Panc1 (cell line): ENCODE measurements at regions of chr1 and their contacts with region 1.

Region 1: GRCh38 chr1:9326596-9326995 is 33.9 kb downstream of the SPSB1 start:
- DNase-seq: no peak
- ATAC-seq: no peak
- H3K4me3 ChIP-seq: no peak overlapping the region
- H3K27ac ChIP-seq: peak overlapping the region; percentile 61; the same call in 1 of the 2 replicates
- H3K4me1 ChIP-seq: peaks cover 77% of the 10 kb centered on the region
- H3K27me3 ChIP-seq: no peaks in the 10 kb centered on the region
- CTCF ChIP-seq: no peak

Region 2: GRCh38 chr1:9302745-9303524 is 23.7 kb before region 1 on chr1:
- CTCF ChIA-PET with region 1: no interaction called
- POLR2A ChIA-PET with region 1: no interaction called
- in situ Hi-C with region 1: no loop called
- intact Hi-C with region 1: no loop called
- DNase-seq: no peak
- ATAC-seq: peak; percentile 86
- H3K4me3 ChIP-seq: peak overlapping the region in 1 of 2 experiments; percentile 9; a peak in 1 of 4 replicates
- H3K27ac ChIP-seq: peak overlapping the region; percentile 62
- H3K4me1 ChIP-seq: peaks cover 28% of the 10 kb centered on the region
- H3K27me3 ChIP-seq: no peaks in the 10 kb centered on the region
- CTCF ChIP-seq: no peak

Region 3: DNA sequence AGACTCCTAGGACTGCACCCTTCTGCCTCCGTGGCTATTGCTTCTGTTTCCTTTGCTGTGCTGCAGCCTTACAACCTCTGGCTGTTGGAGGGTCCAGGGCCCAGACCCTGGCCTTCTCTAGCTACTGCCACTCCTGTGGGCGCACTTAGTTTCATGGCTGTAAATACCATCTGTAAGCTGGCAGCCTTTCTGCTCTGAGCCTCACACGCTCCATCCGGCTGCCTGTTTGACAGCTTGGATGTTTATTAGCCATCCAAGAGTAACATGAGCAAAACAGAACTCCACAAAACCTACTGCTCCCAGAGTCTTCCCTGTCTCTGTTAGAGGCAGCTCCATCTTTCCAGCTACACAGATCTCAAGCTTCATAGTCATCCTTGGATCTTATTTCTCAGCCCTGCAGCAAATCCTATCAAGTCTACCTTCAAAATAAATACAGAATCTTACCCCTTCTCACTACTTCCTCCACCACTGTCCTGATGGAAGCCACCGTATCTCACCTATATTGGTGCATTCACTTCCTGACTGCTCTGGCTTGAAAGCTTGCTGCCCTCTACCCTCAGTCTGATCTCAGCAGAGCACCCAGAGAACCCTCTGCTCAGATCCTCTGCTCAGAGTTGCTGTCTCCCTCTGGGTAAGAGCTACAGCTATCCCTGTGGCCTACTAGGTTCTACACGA is 231.8 kb after region 1 on chr1:
- CTCF ChIA-PET with region 1: interaction called, 11 read pairs
- POLR2A ChIA-PET with region 1: no interaction called
- in situ Hi-C with region 1: no loop called
- intact Hi-C with region 1: no loop called
- DNase-seq: no peak
- ATAC-seq: no peak
- H3K4me3 ChIP-seq: no peak overlapping the region
- H3K27ac ChIP-seq: no peak overlapping the region
- H3K4me1 ChIP-seq: no peaks in the 10 kb centered on the region
- H3K27me3 ChIP-seq: no peaks in the 10 kb centered on the region
- CTCF ChIP-seq: no peak